Activated CD4-positive, alpha-beta memory T cell treated with anti-CD3 and anti-CD28 coated beads for 36 hours (primary cell): ENCODE measurements at regions of chr18 and their contacts with region 1.

Region 1: GRCh38 chr18:2655178-2655953 is at the start of gene SMCHD1:
- DNase-seq: peak; percentile 94
- H3K4me3 Mint-ChIP-seq: peak within 1 kb of the TSS; percentile 91
- H3K27ac Mint-ChIP-seq: peak within 1 kb of the TSS; percentile 97
- H3K4me1 Mint-ChIP-seq: peaks cover 29% of the 10 kb centered on the region
- H3K27me3 Mint-ChIP-seq: no peaks in the 10 kb centered on the region
- total RNA-seq, gene SMCHD1: 86.0 to 94.5 TPM

Region 2: GRCh38 chr18:2325308-2325849 is 330.0 kb before region 1 on chr18:
- CTCF ChIA-PET with region 1: no interaction called
- POLR2A ChIA-PET with region 1: no interaction called
- intact Hi-C with region 1: no loop called
- DNase-seq: no peak
- H3K4me3 Mint-ChIP-seq: no peak overlapping the region
- H3K27ac Mint-ChIP-seq: no peak overlapping the region
- H3K4me1 Mint-ChIP-seq: no peaks in the 10 kb centered on the region
- H3K27me3 Mint-ChIP-seq: peaks cover 15% of the 10 kb centered on the region

Region 3: GRCh38 chr18:2360861-2361260 is 294.5 kb before region 1 on chr18:
- CTCF ChIA-PET with region 1: no interaction called
- POLR2A ChIA-PET with region 1: no interaction called
- intact Hi-C with region 1: no loop called
- DNase-seq: no peak
- H3K4me3 Mint-ChIP-seq: no peak overlapping the region
- H3K27ac Mint-ChIP-seq: no peak overlapping the region
- H3K4me1 Mint-ChIP-seq: no peaks in the 10 kb centered on the region
- H3K27me3 Mint-ChIP-seq: peaks cover 3% of the 10 kb centered on the region

Region 4: DNA sequence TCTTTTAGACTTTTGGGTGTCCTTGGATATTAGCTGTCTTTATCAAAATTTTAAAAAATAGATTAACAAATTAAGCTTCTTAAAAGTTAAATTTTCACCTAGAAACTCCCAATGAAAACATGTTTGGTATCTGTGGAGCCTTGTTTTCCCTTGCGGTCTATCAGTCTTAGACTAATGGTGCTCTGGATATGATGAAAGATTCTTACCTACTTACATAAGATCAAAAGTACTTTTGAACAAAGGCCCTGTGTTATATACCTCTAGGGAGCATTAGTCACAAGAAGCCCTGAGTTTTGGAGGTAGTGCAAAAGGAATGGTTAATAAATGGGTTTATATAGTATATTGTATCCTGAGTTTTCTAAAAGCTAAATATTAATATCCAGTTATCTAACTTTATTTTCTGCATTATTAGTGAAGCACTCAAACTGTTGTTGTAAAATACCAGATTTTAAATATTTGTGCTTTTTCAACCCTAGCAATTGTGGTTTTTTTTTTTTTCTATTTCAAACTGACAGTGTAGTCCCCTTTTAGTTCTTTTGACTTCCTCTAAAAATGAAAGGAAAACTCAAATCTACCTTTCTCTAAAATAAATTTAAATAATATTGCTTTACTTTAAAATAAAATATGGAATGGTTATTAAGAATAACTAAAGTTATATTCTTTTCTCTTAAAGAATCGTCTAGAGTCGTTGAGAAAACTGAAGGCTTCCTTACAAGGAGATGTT is 65.9 kb before region 1 on chr18:
- CTCF ChIA-PET with region 1: interaction called, 3 read pairs
- POLR2A ChIA-PET with region 1: no interaction called
- intact Hi-C with region 1: loop called (anchors 5 kb)
- DNase-seq: no peak
- H3K4me3 Mint-ChIP-seq: peak overlapping the region; percentile 7
- H3K27ac Mint-ChIP-seq: peak overlapping the region; percentile 81
- H3K4me1 Mint-ChIP-seq: peaks cover 37% of the 10 kb centered on the region
- H3K27me3 Mint-ChIP-seq: no peaks in the 10 kb centered on the region

Region 5: GRCh38 chr18:2627821-2628276 is 27.5 kb before region 1 on chr18:
- CTCF ChIA-PET with region 1: no interaction called
- POLR2A ChIA-PET with region 1: interaction called, 10 read pairs
- intact Hi-C with region 1: loop called (anchors 1 kb)
- DNase-seq: peak; percentile 50
- H3K4me3 Mint-ChIP-seq: no peak overlapping the region
- H3K27ac Mint-ChIP-seq: peak overlapping the region; percentile 42
- H3K4me1 Mint-ChIP-seq: peaks cover 24% of the 10 kb centered on the region
- H3K27me3 Mint-ChIP-seq: no peaks in the 10 kb centered on the region

Region 6: GRCh38 chr18:2641638-2642037 is 13.7 kb before region 1 on chr18:
- CTCF ChIA-PET with region 1: interaction called, 5 read pairs
- POLR2A ChIA-PET with region 1: interaction called, 18 read pairs
- intact Hi-C with region 1: loop called (anchors 1 kb)
- DNase-seq: no peak
- H3K4me3 Mint-ChIP-seq: peak overlapping the region; percentile 57
- H3K27ac Mint-ChIP-seq: peak overlapping the region; percentile 58
- H3K4me1 Mint-ChIP-seq: peaks cover 52% of the 10 kb centered on the region
- H3K27me3 Mint-ChIP-seq: no peaks in the 10 kb centered on the region

Region 7: DNA sequence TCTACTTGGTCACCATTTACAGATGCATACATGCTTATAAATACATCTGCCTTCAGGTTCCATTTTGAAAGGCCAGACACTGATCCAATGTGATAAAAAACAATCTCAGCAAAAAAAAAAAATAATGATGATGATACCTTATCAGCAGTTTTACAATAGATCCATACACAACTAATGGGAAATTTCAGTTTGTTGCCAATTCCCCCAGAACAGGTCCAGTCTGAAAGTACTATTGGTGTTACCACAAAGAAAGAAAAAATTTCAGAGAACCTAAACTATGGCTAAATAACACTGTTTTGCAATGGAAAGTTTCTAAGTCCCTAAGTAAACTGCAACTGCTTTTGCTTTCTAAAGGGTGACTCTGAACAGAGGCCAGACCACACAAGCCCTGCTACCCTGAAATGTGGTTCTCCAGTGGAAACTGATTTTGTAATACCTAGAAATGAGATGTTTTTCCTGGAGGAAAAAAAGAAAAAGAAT is 303.5 kb after region 1 on chr18:
- CTCF ChIA-PET with region 1: no interaction called
- POLR2A ChIA-PET with region 1: no interaction called
- intact Hi-C with region 1: loop called (anchors 5 kb)
- DNase-seq: peak; percentile 64
- H3K4me3 Mint-ChIP-seq: peak overlapping the region; percentile 62
- H3K27ac Mint-ChIP-seq: peak overlapping the region; percentile 100
- H3K4me1 Mint-ChIP-seq: peaks cover 92% of the 10 kb centered on the region
- H3K27me3 Mint-ChIP-seq: no peaks in the 10 kb centered on the region

Region 8: GRCh38 chr18:4172196-4173100 is 1517.1 kb after region 1 on chr18:
- CTCF ChIA-PET with region 1: no interaction called
- POLR2A ChIA-PET with region 1: no interaction called
- intact Hi-C with region 1: no loop called
- DNase-seq: no peak
- H3K4me3 Mint-ChIP-seq: no peak overlapping the region
- H3K27ac Mint-ChIP-seq: no peak overlapping the region
- H3K4me1 Mint-ChIP-seq: no peaks in the 10 kb centered on the region
- H3K27me3 Mint-ChIP-seq: no peaks in the 10 kb centered on the region